ENCODE measurements at regions of chr11 and their contacts with region 1.

Region 1: DNA sequence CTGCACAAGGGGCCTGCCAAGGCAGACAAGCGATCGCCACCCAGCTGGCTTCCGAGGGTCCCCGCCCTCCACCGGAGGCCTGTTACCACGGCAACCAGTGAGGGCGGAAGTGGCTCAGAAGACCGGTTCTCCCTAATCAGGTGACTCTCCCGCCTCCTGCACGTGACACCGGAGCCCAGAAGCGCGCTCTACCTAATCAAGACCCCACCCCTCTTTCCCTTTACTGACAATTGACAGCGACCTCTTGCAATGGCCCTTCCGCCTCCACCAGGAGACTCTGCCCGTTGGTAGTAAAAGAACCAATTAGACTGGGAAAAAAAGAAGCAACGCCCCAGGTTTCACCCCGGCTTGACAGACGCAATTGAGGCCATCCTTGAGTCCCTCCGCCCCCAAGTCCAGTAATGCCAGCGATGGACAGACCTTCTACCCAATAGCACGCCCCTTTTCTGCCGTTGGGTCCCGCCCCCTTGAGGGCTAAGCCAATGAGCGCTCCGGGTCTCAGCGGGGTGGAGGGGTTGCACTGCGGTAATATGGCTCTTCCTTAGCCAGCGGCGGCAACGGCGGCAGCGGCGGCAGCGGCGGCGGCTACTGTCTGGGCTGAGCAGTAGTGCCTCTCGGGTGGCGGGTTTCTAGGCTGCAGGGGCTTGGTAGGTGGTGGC is at the start of gene UVRAG:
- DNase-seq: peak; percentile 96
- ATAC-seq: peak; percentile 85
- H3K4me3 Mint-ChIP-seq: no peak within 1 kb of the TSS
- H3K27ac Mint-ChIP-seq: peak within 1 kb of the TSS; percentile 96
- H3K4me1 Mint-ChIP-seq: peaks cover 53% of the 10 kb centered on the region
- H3K27me3 Mint-ChIP-seq: no peaks in the 10 kb centered on the region
- CTCF ChIP-seq: no peak
- total RNA-seq, gene UVRAG: 86.8 and 103 TPM in 2 replicates

Region 2: GRCh38 chr11:75773595-75774353 is 41.0 kb before region 1 on chr11:
- CTCF ChIA-PET with region 1: no interaction called
- POLR2A ChIA-PET with region 1: interaction called, 5 read pairs
- intact Hi-C with region 1: loop called (anchors 1 kb)
- DNase-seq: peak; percentile 42
- ATAC-seq: peak; percentile 80
- H3K4me3 Mint-ChIP-seq: peak overlapping the region; percentile 1
- H3K27ac Mint-ChIP-seq: peak overlapping the region; percentile 76
- H3K4me1 Mint-ChIP-seq: peaks cover 80% of the 10 kb centered on the region
- H3K27me3 Mint-ChIP-seq: no peaks in the 10 kb centered on the region
- CTCF ChIP-seq: no peak

Region 3: DNA sequence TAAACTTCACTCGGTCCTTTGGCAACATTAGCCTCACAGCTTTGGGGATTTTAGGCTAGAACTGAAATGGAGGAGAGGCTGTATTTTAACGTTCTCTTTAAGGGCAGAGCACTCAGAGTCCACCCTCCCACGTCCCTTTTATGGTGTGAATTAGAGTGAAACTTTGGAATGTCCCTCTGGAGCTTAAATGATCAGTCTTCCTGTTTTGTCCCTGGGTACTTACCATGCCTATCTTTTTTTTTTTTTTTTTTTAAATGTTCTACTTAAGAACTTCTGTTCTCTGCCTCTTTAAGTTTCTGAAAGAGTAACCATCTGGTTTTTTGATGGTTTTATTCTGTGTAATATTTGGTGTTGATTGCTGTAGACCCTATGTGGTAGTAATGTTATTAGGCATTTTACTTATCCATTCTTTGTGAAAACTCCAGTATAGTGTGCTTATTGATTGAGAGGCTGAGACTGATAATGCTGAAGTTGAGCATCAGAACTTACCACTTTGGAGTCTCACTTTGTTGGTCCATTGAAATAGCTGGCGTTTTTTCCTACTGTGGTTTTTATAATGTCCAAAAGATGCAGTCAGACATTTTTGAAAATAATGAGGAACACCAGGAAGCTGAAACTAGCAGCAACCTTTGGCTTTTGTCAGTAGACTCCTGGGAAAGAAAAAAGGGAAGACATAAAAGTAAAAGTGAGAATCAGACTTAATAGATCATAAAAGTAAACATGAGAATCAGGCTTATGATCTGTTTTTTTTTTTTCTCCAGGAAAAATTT is 11.8 kb after region 1 on chr11:
- CTCF ChIA-PET with region 1: no interaction called
- POLR2A ChIA-PET with region 1: interaction called, 94 read pairs
- intact Hi-C with region 1: loop called (anchors 1 kb)
- DNase-seq: no peak
- ATAC-seq: no peak
- H3K4me3 Mint-ChIP-seq: peak overlapping the region; percentile 63
- H3K27ac Mint-ChIP-seq: peak overlapping the region; percentile 76
- H3K4me1 Mint-ChIP-seq: peaks cover 87% of the 10 kb centered on the region
- H3K27me3 Mint-ChIP-seq: no peaks in the 10 kb centered on the region
- CTCF ChIP-seq: no peak

Region 4: DNA sequence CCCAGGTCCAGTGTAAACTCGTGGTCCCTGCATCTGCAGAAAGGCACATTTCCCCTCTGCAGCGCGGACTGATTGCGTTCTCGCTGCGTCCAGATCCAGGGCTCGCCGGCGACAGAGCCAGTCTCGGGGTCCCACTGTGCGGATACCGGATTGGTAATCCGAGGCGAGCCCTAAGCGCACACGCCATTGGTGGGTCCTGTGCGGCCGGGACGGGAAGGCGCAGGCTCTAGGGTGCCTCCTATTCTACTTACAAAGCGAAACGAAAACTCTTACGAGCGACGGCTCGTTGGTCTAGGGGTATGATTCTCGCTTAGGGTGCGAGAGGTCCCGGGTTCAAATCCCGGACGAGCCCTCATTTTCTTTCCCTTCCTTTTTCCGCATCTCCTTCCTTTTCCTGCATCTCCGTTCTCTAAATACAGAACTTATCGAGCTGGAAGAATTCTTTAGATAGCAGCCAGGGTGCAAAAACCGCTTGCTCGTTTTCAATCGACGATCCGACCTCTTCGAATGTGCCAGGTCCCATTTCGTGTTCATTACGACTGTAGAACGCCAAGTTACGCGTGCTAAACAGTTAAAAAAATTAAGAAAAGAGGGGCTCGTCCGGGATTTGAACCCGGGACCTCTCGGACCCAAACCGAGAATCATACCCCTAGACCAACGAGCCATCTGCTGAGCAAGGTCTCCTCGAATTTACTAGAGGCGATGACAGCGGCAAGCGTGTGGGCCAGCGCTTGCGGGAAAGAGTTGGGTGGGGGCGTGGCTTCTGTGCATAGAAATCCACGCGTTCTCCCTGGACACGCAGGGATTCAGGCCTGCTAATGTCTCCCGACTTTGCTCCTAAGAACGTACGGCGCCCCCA is 420.6 kb after region 1 on chr11:
- CTCF ChIA-PET with region 1: no interaction called
- POLR2A ChIA-PET with region 1: no interaction called
- intact Hi-C with region 1: loop called (anchors 1 kb)
- DNase-seq: peak; percentile 82
- ATAC-seq: peak; percentile 78
- H3K4me3 Mint-ChIP-seq: peak overlapping the region; percentile 95
- H3K27ac Mint-ChIP-seq: peak overlapping the region; percentile 95
- H3K4me1 Mint-ChIP-seq: peaks cover 32% of the 10 kb centered on the region
- H3K27me3 Mint-ChIP-seq: peaks cover 7% of the 10 kb centered on the region
- CTCF ChIP-seq: no peak

Region 5: DNA sequence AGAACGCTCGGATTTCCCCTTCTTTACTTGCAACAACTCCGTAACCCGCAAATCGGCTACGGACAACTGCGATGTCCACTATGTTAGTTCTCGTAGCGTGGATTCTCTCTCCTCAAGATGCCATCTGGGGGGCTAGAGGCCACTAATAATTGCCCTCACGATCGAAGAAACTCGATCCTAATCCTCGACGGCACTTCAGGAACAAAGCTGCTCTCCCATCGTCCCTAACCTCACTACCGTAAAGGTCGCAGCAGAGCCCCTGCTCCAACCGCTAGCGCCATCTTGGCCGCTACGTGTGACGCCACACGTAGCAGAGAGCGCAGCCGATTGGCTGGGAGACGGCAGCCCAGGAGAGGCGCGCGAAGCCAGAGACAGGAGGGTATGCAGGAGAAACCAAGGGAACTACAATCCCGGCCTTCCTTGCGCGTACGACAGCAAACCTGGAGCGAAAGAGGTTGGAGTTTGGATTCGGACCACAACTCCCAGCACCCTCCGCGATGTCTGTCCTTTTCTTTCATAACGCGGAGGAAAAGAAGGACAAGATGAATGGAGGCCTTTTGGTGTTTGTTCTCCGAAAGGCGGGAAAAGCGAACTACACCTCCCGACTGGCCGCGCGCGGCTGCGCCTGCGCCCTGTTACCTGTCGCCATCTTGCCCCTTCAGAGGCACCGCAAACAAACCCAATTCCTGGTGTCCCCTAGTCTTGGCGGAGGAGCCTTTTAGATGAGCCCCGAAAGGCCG is 629.7 kb after region 1 on chr11 and contains the start of gene EMSY:
- CTCF ChIA-PET with region 1: no interaction called
- POLR2A ChIA-PET with region 1: no interaction called
- intact Hi-C with region 1: loop called (anchors 10 kb)
- DNase-seq: peak; percentile 78
- ATAC-seq: peak; percentile 95
- H3K4me3 Mint-ChIP-seq: peak within 1 kb of the TSS; percentile 95
- H3K27ac Mint-ChIP-seq: peak within 1 kb of the TSS; percentile 93
- H3K4me1 Mint-ChIP-seq: peaks cover 31% of the 10 kb centered on the region
- H3K27me3 Mint-ChIP-seq: no peaks in the 10 kb centered on the region
- CTCF ChIP-seq: no peak
- total RNA-seq, gene EMSY: 24.9 and 31.1 TPM in 2 replicates

Region 6: GRCh38 chr11:77602381-77603088 is 1787.7 kb after region 1 on chr11:
- CTCF ChIA-PET with region 1: no interaction called
- POLR2A ChIA-PET with region 1: no interaction called
- intact Hi-C with region 1: no loop called
- DNase-seq: no peak
- ATAC-seq: no peak
- H3K4me3 Mint-ChIP-seq: no peak overlapping the region
- H3K27ac Mint-ChIP-seq: no peak overlapping the region
- H3K4me1 Mint-ChIP-seq: no peaks in the 10 kb centered on the region
- H3K27me3 Mint-ChIP-seq: no peaks in the 10 kb centered on the region
- CTCF ChIP-seq: no peak

Measured in activated B cell treated with CpG ODN at 0.5 μM for 24 hours (primary cell).